ENCODE measurements at regions of chr17 and their contacts with region 1.

Region 1: GRCh38 chr17:64938925-64939474 is 19.7 kb upstream of the LRRC37A3 start:
- DNase-seq: peak; percentile 54 to 66
- ATAC-seq: peak; percentile 84 to 95
- H3K4me3 ChIP-seq: no peak overlapping the region
- H3K27ac ChIP-seq: 0 out of 6 replicates have a peak overlapping the region, but pooled peaks of 1 of the 2 experiments have one; percentile 9
- H3K4me1 ChIP-seq: peaks cover 13% of the 10 kb centered on the region
- CTCF ChIP-seq: peak; percentile 62
- EP300 ChIP-seq: no peak
- POLR2A ChIP-seq: no peak
- RAD21 ChIP-seq: peak; percentile 68 to 75

Region 2: DNA sequence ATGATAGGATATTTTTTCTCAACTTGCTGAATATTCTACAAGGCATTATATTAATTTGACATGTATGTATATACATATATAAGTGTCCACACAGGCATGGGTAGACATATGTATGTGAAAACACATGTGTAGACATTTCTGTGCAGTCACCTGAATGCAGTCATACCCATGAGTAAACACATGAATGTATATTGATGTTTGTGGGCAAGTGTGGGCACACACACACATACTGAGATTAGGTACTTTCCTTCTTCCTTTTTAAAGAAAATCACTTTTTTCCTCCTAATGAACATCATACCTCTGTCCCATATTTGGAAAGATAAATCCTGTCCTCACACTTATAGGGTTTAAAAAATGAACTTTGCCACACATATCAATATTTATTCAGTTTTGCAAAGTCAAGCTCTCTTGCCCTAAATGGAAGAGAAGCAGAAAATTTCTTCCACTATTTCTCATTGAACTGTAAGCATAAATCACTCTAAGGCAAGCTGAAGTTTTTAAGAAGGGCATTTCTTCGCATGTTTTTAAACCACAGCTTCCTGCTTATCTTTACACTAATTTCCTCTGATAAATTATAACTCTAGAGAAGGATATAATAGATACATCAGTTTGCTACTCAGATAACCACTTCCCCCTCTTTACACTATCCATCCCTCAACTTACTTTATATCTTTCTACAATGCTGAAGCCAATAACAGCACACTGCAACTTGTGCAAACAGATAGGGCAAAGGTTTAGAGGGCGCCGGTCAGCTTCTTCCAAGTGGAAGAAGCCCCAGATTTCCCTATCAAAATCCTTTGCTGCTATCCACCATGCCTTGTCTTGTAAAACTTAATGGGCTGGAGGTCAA is 29.9 kb after region 1 on chr17:
- CTCF ChIA-PET with region 1: interaction called, 125 read pairs
- POLR2A ChIA-PET with region 1: no interaction called
- DNase-seq: no peak
- ATAC-seq: no peak
- H3K4me3 ChIP-seq: no peak overlapping the region
- H3K27ac ChIP-seq: no peak overlapping the region
- H3K4me1 ChIP-seq: peaks cover 18% of the 10 kb centered on the region
- CTCF ChIP-seq: no peak
- EP300 ChIP-seq: no peak
- POLR2A ChIP-seq: no peak
- RAD21 ChIP-seq: no peak

Measured in A549 (cell line).